MCF 10A (cell line): ENCODE measurements at regions of chr19 and their contacts with region 1.

Region 1: DNA sequence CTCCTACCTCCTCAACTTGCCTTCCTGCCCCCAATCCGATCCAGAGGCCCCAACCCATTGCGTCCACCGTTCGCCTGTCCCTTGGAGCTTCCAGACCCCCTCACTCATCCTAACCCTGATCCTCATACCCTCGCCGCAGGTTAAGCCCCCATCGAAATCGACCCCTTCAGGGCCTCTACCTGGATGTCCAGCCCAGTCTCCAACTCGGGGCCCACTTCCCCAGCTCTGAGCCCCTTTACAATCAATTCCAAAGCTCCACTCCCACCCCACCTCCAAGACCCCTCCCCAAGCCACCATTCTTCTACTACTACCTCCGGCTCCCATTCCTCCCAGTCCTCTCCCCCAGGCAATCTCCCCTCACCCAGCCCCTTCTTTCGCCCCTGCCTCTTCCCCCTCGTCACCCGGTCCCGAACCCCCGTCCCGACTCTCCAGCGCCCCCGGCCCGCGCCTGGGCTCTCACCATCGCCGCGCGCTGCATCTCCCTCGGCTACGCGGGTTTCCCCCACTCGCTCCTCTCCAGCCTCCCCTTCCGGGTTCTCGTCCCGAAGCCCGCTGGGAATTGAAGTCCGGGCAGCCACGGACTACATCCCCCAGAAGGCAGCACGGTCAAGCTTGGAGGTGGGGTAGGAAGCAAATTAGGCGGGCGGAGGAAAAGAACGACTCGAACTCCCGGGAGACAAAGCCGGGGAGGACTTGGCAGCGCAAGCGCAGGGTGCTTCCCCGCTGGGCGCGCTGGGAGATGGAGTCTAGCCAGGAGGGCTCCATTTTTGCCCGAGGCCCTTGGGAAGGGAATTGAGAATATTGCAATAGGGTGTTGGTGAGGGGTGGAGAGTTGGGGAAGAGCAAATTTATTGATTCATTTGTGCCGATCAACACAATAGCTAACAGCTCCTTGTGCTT is at the start of gene FBXO46:
- DNase-seq: peak; percentile 99
- H3K4me3 Mint-ChIP-seq: peak within 1 kb of the TSS; percentile 99
- H3K27ac Mint-ChIP-seq: peak within 1 kb of the TSS; percentile 82
- H3K4me1 Mint-ChIP-seq: peaks cover 13% of the 10 kb centered on the region
- H3K27me3 Mint-ChIP-seq: no peaks in the 10 kb centered on the region
- CTCF ChIP-seq: no peak
- total RNA-seq, gene FBXO46: 13.6 and 15.0 TPM in 2 replicates

Region 2: DNA sequence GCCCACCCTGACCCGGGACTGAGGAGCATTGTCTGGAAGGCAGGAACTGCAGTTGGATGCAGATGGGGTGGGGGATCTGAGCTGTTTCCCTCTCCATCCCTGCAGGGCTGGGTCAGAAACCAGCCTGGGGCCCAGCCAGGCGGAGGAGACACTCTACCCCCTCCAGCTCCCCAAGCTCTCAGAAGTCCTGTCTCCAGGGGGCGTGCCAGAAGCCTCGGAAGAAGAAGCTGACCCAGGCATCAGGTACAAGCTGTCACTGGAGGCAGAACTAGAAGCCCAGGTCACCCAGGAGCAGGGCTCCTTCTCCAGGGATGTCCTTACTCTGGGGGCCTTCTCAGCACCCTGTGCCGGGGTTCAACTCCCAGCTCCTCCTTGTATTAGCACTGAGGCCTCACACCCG is 22.9 kb after region 1 on chr19:
- CTCF ChIA-PET with region 1: interaction called, 5 read pairs
- POLR2A ChIA-PET with region 1: interaction called, 10 read pairs
- intact Hi-C with region 1: no loop called
- DNase-seq: no peak
- H3K4me3 Mint-ChIP-seq: no peak overlapping the region
- H3K27ac Mint-ChIP-seq: no peak overlapping the region
- H3K4me1 Mint-ChIP-seq: peaks cover 12% of the 10 kb centered on the region
- H3K27me3 Mint-ChIP-seq: no peaks in the 10 kb centered on the region
- CTCF ChIP-seq: no peak